Posterior vena cava (tissue), 2 donors: ENCODE measurements at regions of chr21 and their contacts with region 1.

Region 1: GRCh38 chr21:41835711-41836154 is 43.4 kb downstream of the PRDM15 start:
- DNase-seq: no peak

Region 2: DNA sequence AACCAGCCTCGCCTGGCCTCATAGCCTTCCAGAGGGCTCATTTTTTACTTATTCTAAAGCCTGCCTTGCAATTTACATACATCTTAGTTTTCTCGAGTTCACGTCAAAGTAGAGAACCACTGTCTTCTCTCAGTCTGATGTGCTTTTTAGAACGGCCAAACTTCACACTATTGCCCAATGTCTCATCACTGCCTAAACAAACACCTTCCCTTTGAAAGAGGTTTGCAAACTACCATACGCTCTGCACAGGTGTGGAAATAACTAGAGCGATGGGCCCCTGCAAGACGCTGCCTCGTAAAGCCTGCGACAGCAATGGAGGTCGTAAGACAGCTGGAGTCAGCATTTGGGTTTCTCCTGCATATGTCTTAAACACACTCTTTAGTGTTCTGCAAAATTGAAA is 20.8 kb after region 1 on chr21:
- intact Hi-C with region 1: loop called in 1 of 2 experiments (anchors 1 kb)
- DNase-seq: peak; percentile 20

Region 3: GRCh38 chr21:42125571-42126544 is 290.1 kb after region 1 on chr21:
- intact Hi-C with region 1: loop called in 1 of 2 experiments (anchors 1 kb)
- DNase-seq: no peak